Aorta (tissue), 5 donors: ENCODE measurements at regions of chr1 and their contacts with region 1.

Region 1: DNA sequence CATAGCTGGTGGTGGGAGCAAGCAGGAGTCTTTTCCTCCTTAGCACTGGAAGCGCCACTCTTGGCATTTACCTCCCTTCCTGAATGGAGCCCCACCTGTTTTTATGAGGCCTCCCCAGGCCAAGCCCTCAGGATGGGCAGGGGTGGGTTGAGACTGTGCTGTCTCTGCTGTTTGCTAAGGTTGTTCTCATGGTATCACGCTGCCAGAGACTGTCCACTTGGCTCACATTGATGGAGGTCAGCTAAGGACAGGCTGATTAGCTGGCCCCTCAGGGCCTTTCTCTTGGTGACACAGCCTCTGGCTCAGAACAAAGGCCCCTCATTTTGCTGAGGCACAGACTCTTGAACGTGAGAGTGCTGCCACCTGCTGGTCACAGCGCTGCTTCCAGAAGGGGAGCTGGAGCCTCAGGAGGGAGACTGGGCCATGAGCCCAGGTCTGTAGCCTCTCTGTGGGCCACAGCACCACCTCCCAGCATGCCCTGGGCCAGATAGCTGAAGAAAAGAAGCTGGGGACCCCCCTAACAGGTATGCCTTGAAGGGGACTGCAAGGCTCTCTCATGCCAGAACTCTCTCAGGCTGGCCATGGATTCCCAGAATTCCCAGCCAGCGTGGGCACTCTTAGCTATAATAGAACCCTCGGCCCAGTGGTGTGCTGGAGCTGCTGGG is 85.6 kb downstream of the CD58 start:
- DNase-seq: peak; percentile 91 to 97
- ATAC-seq: peak; percentile 92
- H3K4me3 ChIP-seq: no peak overlapping the region
- H3K27ac ChIP-seq: no peak overlapping the region
- H3K4me1 ChIP-seq: no peaks in the 10 kb centered on the region
- H3K27me3 ChIP-seq: no peaks in the 10 kb centered on the region

Region 2: DNA sequence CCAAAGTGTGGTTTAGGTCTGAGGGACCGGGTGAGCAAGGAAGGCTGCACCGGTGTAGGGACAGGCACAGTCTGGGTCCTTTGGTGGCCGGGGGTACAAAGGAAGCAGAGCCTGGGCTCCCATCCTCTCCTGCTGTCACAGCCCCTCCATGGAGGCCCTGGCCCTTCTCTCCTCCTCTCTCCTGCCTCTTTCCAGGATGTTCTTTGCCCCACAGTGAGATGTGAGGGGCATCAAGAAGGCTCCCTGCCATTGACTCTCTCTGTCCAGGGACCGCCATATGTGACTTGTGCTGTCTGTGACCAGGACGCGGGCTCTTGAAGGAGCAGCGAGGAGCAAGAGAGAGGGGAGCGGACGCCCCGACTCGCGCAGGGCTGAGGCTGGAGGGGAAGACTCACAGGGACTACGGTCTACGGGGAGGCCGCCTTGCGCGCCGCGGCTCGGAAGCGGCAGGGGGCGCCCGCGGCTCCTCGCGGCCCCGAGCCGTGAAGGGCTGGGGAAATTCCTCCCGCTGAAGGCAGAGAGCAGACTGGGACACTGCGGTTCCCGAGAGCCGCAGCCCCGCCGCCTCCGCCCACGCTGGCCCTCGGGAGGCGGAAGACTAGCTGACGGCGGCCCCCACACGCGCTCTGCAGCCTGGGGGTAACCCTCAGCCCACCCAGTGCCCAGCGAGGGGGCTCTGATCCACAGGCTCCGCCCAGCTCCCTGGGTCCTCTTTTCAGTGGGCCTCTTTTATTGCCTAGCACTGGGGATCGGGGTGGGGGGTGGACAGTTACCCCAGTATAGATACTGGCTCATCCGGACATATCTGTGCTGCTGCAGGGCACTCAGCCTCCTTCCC is 333.2 kb before region 1 on chr1:
- intact Hi-C with region 1: loop called (anchors 5 kb)
- DNase-seq: peak; percentile 85 to 90
- ATAC-seq: peak; percentile 96
- H3K4me3 ChIP-seq: peak overlapping the region in 1 of 2 donors; percentile 1
- H3K27ac ChIP-seq: no peak overlapping the region
- H3K4me1 ChIP-seq: no peaks in the 10 kb centered on the region
- H3K27me3 ChIP-seq: no peaks in the 10 kb centered on the region

Region 3: DNA sequence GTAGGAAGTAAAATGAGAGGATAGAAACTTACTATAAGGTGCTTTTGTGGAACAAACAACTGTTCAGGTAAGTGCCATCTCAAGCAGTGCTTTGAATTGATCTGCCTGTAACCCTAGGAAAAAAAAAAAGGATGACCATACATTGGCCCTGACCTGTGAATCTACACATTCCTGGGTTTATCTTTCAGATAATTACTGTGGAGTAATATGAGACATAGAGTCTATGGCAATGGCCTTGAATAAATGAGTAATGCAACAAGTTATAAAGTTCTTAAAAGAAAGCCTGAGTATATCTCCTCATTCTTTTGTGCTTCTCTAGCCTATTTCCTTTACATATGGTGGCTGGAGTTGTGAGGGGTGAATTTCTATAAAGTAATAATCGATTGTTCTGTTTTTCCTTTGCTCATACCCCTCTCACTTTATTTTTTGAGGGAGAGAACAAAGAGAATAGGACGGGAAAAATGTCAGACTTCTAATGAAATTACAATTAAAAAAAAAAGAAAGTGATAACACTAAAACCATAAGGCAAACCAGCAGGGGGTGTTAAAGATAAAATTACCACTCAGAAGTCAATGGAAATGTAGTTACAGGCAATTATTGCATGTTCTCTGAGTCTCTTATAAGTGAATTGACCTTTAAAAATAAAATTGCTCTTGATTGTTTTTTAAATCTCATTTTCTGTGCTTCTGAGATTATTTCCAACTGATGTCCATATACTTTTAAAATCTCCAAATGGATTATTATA is 124.6 kb before region 1 on chr1:
- intact Hi-C with region 1: loop called (anchors 1 to 2 kb)
- DNase-seq: no peak
- ATAC-seq: no peak
- H3K4me3 ChIP-seq: no peak overlapping the region
- H3K27ac ChIP-seq: no peak overlapping the region
- H3K4me1 ChIP-seq: no peaks in the 10 kb centered on the region
- H3K27me3 ChIP-seq: no peaks in the 10 kb centered on the region

Region 4: GRCh38 chr1:116418091-116418830 is 66.9 kb before region 1 on chr1:
- intact Hi-C with region 1: loop called in 1 of 2 experiments (anchors 10 kb)
- DNase-seq: peak; percentile 89 to 94
- ATAC-seq: peak; percentile 96
- H3K4me3 ChIP-seq: peak overlapping the region; percentile 73 to 84
- H3K27ac ChIP-seq: no peak overlapping the region
- H3K4me1 ChIP-seq: no peaks in the 10 kb centered on the region
- H3K27me3 ChIP-seq: no peaks in the 10 kb centered on the region

Region 5: DNA sequence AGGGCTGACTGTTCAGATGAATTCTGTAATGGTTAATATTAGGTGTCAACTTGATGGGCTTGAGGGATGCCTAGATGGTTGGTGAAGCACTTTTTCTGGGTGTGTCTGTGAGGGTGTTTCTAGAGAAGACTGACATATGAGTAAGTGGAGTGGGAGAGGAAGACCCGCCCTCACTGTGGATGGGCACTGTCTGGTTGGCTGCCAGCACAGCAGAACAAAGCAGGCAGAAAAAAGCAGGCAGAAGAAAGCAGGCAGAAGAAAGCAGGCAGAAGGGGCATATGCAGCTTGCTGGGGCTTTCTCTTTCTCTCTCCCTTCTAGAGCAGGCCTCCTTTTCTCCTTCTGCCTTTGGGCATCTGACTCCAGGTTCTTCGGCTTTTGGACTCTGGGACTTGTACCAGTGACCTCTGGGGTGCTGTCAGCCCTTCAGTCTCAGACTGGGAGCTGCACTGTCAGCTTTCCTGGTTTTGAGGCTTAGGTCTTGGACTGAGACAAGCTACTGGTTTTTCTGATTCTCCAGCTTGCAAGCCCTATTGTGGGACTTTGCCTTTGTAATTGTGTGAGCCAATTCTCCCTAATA is 226.1 kb after region 1 on chr1:
- intact Hi-C with region 1: no loop called
- DNase-seq: no peak
- ATAC-seq: no peak
- H3K4me3 ChIP-seq: no peak overlapping the region
- H3K27ac ChIP-seq: no peak overlapping the region
- H3K4me1 ChIP-seq: peaks cover 0 to 8% of the 10 kb centered on the region in 2 donors
- H3K27me3 ChIP-seq: no peaks in the 10 kb centered on the region